ENCODE measurements at regions of chr19 and their contacts with region 1.

Region 1: GRCh38 chr19:10416380-10417257 is 3.7 kb upstream of the PDE4A start:
- H3K4me3 Mint-ChIP-seq: peak overlapping the region; percentile 83
- H3K27ac Mint-ChIP-seq: peak overlapping the region; percentile 91
- H3K4me1 Mint-ChIP-seq: peaks cover 62% of the 10 kb centered on the region
- H3K27me3 Mint-ChIP-seq: peaks cover 47% of the 10 kb centered on the region

Region 2: DNA sequence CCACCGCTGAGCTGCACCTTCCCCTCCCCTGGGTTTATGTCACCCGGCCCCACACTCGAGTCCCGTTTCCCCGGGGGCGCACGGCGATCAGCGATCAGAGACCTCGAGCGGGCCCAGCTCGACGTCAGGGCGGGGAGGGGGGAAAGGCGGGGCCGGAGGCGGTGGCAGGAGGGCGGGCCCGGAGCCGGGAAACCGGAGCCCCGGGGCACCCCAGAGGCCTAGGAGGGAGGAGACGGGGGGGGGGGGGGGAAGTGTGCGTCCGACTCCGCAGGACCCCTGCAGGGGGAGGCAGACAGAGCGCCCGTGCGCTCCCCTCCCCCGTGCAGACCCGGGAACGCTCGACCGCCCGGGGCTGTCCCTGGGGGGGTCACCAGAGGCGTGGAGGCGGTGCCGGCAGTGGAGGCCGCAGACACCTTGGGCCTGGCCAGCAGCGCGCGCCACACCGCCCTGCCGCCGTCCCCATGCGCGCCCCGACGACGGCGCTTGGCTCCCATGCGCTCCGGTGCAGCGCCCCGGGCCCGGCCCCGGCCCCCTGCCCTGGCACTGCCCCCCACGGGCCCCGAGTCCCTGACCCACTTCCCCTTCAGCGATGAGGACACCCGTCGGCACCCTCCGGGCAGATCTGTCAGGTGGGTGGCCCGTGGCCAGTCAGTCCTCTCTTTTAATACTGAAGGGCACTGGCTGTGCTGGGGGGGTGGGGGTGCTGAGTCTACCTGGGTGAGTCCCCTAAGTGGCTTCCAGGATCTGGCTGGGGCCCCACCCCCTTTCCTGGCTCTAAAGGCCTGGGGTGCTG is 15.5 kb after region 1 on chr19:
- intact Hi-C with region 1: loop called (anchors 2 kb)
- H3K4me3 Mint-ChIP-seq: peak overlapping the region; percentile 98
- H3K27ac Mint-ChIP-seq: peak overlapping the region; percentile 92
- H3K4me1 Mint-ChIP-seq: peaks cover 77% of the 10 kb centered on the region
- H3K27me3 Mint-ChIP-seq: peaks cover 10% of the 10 kb centered on the region